OCI-LY7 (cell line): ENCODE measurements at regions of chr13 and their contacts with region 1.

Region 1: DNA sequence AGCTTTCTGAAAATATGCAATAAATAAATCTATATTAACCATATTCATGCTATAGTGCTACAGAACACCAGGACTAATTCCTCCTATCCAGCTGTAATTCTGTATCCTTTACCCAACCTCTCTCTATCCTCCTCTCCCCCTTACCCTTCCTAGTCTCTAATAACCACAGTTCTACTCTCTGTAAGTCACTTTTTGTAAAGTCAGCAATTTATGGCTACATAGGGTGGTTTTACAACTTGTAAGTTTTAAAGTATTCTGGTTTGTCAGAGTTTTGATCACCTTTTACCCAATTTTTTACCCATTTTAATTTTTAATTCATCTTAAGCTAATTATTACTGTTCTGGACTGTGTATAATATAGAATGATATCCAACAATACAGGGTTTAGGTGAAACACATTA is 34.0 kb downstream of the MTRF1 start:
- DNase-seq: no peak
- H3K4me3 ChIP-seq: no peak overlapping the region
- H3K27ac ChIP-seq: no peak overlapping the region
- H3K4me1 ChIP-seq: peaks cover 14% of the 10 kb centered on the region
- CTCF ChIP-seq: no peak

Region 2: GRCh38 chr13:41299316-41300094 is 70.1 kb after region 1 on chr13:
- CTCF ChIA-PET with region 1: no interaction called
- POLR2A ChIA-PET with region 1: interaction called, 10 read pairs
- intact Hi-C with region 1: no loop called
- DNase-seq: no peak
- H3K4me3 ChIP-seq: no peak overlapping the region
- H3K27ac ChIP-seq: no peak overlapping the region
- H3K4me1 ChIP-seq: no peaks in the 10 kb centered on the region
- CTCF ChIP-seq: no peak